ENCODE measurements at regions of chr11 and their contacts with region 1.

Region 1: DNA sequence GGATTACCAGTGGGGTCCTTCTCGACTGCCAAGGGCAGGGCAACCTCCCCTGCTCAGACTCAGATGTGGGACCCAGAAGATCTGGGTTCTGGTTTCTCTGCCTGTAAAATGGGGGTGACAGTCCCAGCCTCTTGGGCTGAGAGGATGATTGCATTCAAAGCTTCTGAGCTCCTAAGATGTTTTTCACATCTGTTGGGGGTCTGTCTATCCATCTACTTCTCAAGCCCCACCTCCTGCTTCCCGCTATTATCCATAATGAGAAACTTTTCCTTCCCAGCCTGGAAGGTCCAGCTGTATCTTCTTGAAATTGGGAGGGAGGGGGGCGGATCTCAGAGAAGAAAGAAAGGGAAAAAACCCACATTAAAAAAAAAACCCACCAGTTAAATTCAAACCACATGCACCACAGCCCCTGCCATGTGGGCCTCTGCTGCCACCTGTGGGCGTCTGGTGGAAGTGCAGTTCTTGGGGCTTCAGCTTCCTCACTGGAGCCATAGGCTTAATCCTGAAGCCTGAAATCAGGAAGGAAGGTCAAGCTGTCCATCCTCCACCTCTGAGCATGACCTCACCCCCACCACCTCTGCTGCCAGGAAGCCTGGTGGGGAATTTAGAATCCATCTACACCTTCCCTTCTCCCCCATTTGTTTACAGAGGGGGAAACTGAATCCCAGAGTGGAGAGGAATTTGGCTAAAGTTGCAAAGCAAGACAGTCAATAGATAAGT is 27.3 kb downstream of the ARHGEF17 start:
- DNase-seq: peak; percentile 82 to 90
- ATAC-seq: peak; percentile 72 to 92 (median 84)
- H3K4me3 ChIP-seq: no peak overlapping the region
- H3K27ac ChIP-seq: peak overlapping the region; percentile 50
- H3K4me1 ChIP-seq: peaks cover 11% of the 10 kb centered on the region
- H3K27me3 ChIP-seq: no peaks in the 10 kb centered on the region
- CTCF ChIP-seq: peak; percentile 99

Region 2: GRCh38 chr11:73295231-73295995 is 40.0 kb before region 1 on chr11:
- intact Hi-C with region 1: loop called in 1 of 2 experiments (anchors 5 kb)
- DNase-seq: peak; percentile 61 to 74
- ATAC-seq: peak in 2 of 4 donors; percentile 40 to 41
- H3K4me3 ChIP-seq: no peak overlapping the region
- H3K27ac ChIP-seq: no peak overlapping the region
- H3K4me1 ChIP-seq: no peaks in the 10 kb centered on the region
- H3K27me3 ChIP-seq: no peaks in the 10 kb centered on the region
- CTCF ChIP-seq: peak; percentile 71

Region 3: GRCh38 chr11:73307323-73308002 is 27.9 kb before region 1 on chr11:
- intact Hi-C with region 1: loop called (anchors 1 kb)
- DNase-seq: peak; percentile 97 to 98
- ATAC-seq: peak; percentile 64 to 88 (median 76)
- H3K4me3 ChIP-seq: peak overlapping the region; percentile 80
- H3K27ac ChIP-seq: peak overlapping the region; percentile 82
- H3K4me1 ChIP-seq: peaks cover 9% of the 10 kb centered on the region
- H3K27me3 ChIP-seq: peaks cover 0 to 5% (median 4%) of the 10 kb centered on the region in 3 donors
- CTCF ChIP-seq: peak; percentile 75

Region 4: GRCh38 chr11:73598719-73599379 is 263.5 kb after region 1 on chr11:
- intact Hi-C with region 1: no loop called
- DNase-seq: no peak
- ATAC-seq: no peak
- H3K4me3 ChIP-seq: peak overlapping the region; percentile 82
- H3K27ac ChIP-seq: peak overlapping the region; percentile 82
- H3K4me1 ChIP-seq: peaks cover 18% of the 10 kb centered on the region
- H3K27me3 ChIP-seq: no peaks in the 10 kb centered on the region
- CTCF ChIP-seq: no peak

Measured in psoas muscle (tissue), 8 donors.